CD14-positive monocyte (primary cell): ENCODE measurements at regions of chr4 and their contacts with region 1.

Region 1: GRCh38 chr4:2262143-2262943 is 434 bp upstream of the MXD4 start:
- DNase-seq: peak; percentile 98 to 99 (median 98)
- H3K4me3 ChIP-seq: peak overlapping the region; percentile 53 to 93 (median 65)
- H3K4me3 Mint-ChIP-seq: peak overlapping the region; percentile 74 to 83
- H3K27ac ChIP-seq: peak overlapping the region; percentile 86 to 87
- H3K27ac Mint-ChIP-seq: peak overlapping the region; percentile 65 to 87 (median 81)
- H3K4me1 ChIP-seq: peaks cover 22 to 25% of the 10 kb centered on the region in 2 donors
- H3K4me1 Mint-ChIP-seq: peaks cover 15% of the 10 kb centered on the region
- H3K27me3 ChIP-seq: no peaks in the 10 kb centered on the region
- H3K27me3 Mint-ChIP-seq: peaks cover 0 to 3% (median 0%) of the 10 kb centered on the region in 3 donors
- CTCF ChIP-seq: no peak

Region 2: GRCh38 chr4:1712216-1713002 is 549.9 kb before region 1 on chr4 and contains the start of gene SLBP:
- intact Hi-C with region 1: loop called in 1 of 2 experiments (anchors 10 kb)
- DNase-seq: peak; percentile 97 to 99 (median 98)
- H3K4me3 ChIP-seq: peak within 1 kb of the TSS; percentile 73 to 91 (median 88)
- H3K4me3 Mint-ChIP-seq: peak within 1 kb of the TSS; percentile 97 to 98
- H3K27ac ChIP-seq: peak within 1 kb of the TSS; percentile 68 to 92
- H3K27ac Mint-ChIP-seq: peak within 1 kb of the TSS; percentile 95 to 99 (median 97)
- H3K4me1 ChIP-seq: peaks cover 48 to 61% of the 10 kb centered on the region in 2 donors
- H3K4me1 Mint-ChIP-seq: peaks cover 59% of the 10 kb centered on the region
- H3K27me3 ChIP-seq: no peaks in the 10 kb centered on the region
- H3K27me3 Mint-ChIP-seq: no peaks in the 10 kb centered on the region
- CTCF ChIP-seq: no peak
- polyA plus RNA-seq, gene SLBP: 39.6 to 63.7 (median 59.1) TPM